Psoas muscle (tissue), 8 donors: ENCODE measurements at regions of chr10 and their contacts with region 1.

Region 1: GRCh38 chr10:50226610-50227009 is 24.7 kb downstream of the ASAH2 start:
- DNase-seq: no peak
- ATAC-seq: no peak
- H3K4me3 ChIP-seq: no peak overlapping the region
- H3K27ac ChIP-seq: no peak overlapping the region
- H3K4me1 ChIP-seq: no peaks in the 10 kb centered on the region
- H3K27me3 ChIP-seq: peaks cover 0 to 3% (median 0%) of the 10 kb centered on the region in 3 donors
- CTCF ChIP-seq: no peak

Region 2: DNA sequence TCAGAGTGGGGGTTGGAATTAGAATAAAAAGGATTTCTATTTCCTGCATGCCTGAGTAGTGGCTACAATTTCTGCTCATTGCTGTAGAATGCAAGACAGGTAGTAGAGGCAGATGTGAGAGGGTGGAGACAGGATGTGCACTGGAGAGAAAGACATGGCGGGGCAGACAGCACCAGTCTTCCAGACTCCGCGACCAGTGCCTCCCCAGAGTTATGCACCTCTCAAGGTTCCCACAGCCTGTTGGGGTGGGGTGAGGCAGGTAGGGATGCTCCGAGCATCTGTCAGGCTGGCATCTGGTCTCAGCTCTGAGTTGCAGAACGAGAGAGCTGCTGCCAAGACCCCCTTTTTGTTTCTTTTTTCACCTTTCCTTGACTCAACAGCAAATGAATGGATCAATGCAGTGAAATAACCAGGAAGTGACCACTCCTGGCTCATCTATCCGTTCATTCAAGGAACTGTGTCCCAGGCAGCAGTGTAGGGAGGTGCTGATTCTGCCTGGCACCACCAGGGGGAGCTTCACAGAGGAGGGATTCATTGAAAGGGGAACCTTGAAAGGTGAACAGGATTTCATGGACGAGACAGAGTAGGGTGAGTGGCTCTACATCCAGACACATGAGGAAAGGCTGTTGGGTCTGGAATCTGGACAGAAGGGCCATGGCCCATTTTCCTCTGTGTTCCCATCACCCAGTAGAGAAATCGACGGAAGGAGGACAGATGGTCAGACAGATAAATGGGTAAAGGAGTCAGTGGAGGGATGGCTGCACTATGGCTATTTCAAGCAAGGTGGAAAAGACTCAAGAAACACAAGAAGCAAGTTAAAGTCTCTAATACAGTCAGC is 633.7 kb before region 1 on chr10:
- intact Hi-C with region 1: loop called in 1 of 2 experiments (anchors 5 kb)
- DNase-seq: no peak
- ATAC-seq: peak; percentile 55 to 69 (median 60)
- H3K4me3 ChIP-seq: no peak overlapping the region
- H3K27ac ChIP-seq: no peak overlapping the region
- H3K4me1 ChIP-seq: no peaks in the 10 kb centered on the region
- H3K27me3 ChIP-seq: no peaks in the 10 kb centered on the region
- CTCF ChIP-seq: peak; percentile 80

Region 3: GRCh38 chr10:50396491-50397311 is 170.1 kb after region 1 on chr10:
- intact Hi-C with region 1: no loop called
- DNase-seq: no peak
- ATAC-seq: no peak
- H3K4me3 ChIP-seq: no peak overlapping the region
- H3K27ac ChIP-seq: no peak overlapping the region
- H3K4me1 ChIP-seq: peaks cover 40% of the 10 kb centered on the region
- H3K27me3 ChIP-seq: no peaks in the 10 kb centered on the region
- CTCF ChIP-seq: no peak